Uterus (tissue), 4 donors: ENCODE measurements at regions of chr1 and their contacts with region 1.

Region 1: DNA sequence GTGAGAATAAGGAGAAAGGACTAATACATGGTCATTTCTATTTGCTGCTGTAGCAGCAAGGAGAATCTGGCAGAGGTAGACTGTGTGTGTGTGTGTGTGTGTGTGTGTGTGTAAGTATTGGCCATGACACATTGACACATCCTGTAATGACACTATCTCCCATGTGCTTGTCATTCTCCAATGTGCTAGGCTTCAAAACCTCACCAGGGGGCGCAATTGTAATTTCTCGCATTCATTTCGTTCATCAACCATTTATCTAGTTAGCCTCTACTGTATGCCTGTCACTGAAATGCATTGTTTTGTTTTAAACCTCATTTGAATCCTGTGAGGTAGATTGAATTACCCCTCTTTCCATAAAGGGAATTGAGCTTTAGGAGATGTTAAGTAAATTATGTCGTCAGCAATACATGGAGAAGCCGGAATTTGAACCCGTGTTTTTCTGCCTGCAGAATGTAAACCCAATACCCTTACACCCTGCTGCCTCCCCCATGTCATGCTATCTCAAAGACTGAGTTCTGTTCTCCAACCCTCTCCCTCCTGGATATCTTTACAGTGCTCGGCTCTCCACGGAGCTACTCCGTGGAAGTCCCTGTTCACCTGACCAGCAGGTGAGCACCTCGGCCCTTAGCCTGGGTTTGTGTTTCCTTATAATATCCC is 100.8 kb downstream of the UCK2 start:
- DNase-seq: peak in 1 of 2 donors; percentile 36
- H3K4me3 ChIP-seq: no peak overlapping the region
- H3K27ac ChIP-seq: no peak overlapping the region
- H3K4me1 ChIP-seq: peaks cover 0 to 4% of the 10 kb centered on the region in 2 donors
- H3K27me3 ChIP-seq: no peaks in the 10 kb centered on the region
- CTCF ChIP-seq: peak; percentile 54 to 67 (median 60)
- POLR2A ChIP-seq: no peak

Region 2: DNA sequence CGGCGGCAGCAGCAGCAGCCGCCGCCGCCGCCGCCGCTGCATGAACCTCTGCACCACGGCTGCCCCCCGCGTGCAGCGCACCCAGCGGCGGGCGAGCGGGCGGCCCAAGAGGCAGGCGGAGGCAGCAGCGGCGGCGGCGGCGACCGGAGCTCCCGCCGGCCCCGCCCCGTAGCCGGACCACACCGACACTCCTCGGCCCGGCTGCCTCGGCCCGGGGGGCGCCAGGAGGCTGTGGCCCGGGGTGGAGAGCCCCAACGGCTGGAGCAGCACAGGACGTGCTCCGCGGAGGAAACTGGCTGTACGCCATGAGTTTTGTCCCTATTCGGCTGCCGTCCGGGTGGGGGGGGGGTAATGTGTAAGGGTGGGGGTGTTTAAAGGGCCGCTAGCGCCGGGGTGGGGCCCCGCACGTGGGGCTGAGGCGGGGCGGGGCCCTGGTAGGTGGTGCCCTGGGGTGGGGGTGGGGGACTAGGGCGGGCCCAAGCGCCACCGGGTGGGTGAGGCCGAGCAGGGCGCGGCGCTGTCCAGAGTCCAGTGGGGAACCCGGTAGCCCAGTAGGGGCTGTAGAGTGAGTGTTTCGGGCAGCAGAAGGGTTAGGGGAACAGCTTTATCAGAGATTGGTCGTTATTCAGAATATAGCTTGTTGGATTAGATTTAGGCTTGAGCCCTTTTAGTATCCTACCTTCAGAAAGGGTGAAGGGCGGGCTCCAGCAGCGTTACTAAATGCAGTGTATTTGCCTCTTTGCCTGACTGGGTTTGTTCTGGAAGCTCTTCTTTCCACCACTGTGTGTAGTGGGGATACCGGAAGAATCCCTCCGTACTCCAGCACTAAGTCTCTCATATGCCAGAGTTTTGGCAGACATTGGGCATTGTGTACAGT is 238.7 kb after region 1 on chr1 and contains the start of gene FAM78B:
- intact Hi-C with region 1: loop called (anchors 10 kb)
- DNase-seq: peak; percentile 68 to 83
- H3K4me3 ChIP-seq: peak within 1 kb of the TSS; percentile 53 to 79
- H3K27ac ChIP-seq: peak within 1 kb of the TSS; percentile 75 to 82
- H3K4me1 ChIP-seq: no peaks in the 10 kb centered on the region
- H3K27me3 ChIP-seq: no peaks in the 10 kb centered on the region
- CTCF ChIP-seq: peak in 3 of 4 experiments; percentile 15 to 26 (median 24)
- POLR2A ChIP-seq: no peak
- total RNA-seq, gene FAM78B: 0.21 to 3.3 (median 0.26) TPM in 3 of 4 donors, not detected in the other